ENCODE measurements at regions of chr12 and their contacts with region 1.

Region 1: DNA sequence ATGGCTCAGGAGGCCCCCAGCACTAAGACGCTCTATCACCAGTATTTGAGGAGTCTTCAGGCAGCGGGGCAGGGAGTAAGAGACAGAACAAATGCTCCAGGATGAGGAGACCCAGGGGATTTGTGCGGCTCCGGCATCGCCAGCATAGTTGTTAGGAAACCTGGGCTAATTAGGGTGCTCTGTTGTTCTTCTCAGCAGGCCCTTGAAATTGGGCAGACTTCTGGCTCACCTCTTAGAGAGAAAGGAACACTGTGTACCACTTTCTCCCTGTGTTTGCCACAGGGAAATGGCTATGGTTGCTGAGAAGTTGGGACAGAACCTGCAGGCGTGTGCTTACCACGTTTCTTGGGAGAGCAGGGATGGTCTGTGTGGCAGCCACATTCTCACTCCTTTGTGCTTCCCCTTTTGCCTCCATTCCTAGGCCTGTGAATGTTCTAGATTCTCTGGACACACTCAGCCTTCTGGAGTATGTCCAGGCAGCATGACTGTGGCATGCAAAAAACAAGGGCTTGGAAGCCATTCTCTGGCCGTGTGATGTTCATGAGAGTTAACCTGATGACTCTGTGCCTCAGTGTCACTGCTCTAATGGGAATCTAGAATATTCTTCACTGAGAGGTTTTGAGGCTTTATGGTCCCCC is 109.0 kb downstream of the CHST11 start:
- DNase-seq: no peak
- ATAC-seq: no peak
- H3K4me3 ChIP-seq: no peak overlapping the region
- H3K4me3 Mint-ChIP-seq: no peak overlapping the region
- H3K27ac ChIP-seq: no peak overlapping the region
- H3K27ac Mint-ChIP-seq: peak overlapping the region; percentile 23 to 45
- H3K4me1 ChIP-seq: peaks cover 15 to 47% of the 10 kb centered on the region in 2 experiments
- H3K4me1 Mint-ChIP-seq: peaks cover 57 to 67% (median 62%) of the 10 kb centered on the region in 3 donors
- H3K27me3 ChIP-seq: no peaks in the 10 kb centered on the region
- H3K27me3 Mint-ChIP-seq: no peaks in the 10 kb centered on the region

Region 2: GRCh38 chr12:104664351-104664750 is 98.6 kb after region 1 on chr12:
- CTCF ChIA-PET with region 1: no interaction called
- POLR2A ChIA-PET with region 1: interaction called in 1 of 2 experiments, 15 read pairs
- DNase-seq: no peak
- ATAC-seq: no peak
- H3K4me3 ChIP-seq: no peak overlapping the region
- H3K4me3 Mint-ChIP-seq: no peak overlapping the region
- H3K27ac ChIP-seq: no peak overlapping the region
- H3K27ac Mint-ChIP-seq: no peak overlapping the region
- H3K4me1 ChIP-seq: peaks cover 0 to 17% of the 10 kb centered on the region in 2 experiments
- H3K4me1 Mint-ChIP-seq: peaks cover 11 to 51% (median 43%) of the 10 kb centered on the region in 3 donors
- H3K27me3 ChIP-seq: no peaks in the 10 kb centered on the region
- H3K27me3 Mint-ChIP-seq: no peaks in the 10 kb centered on the region